Esophagus squamous epithelium (tissue), 5 donors: ENCODE measurements at regions of chr17 and their contacts with region 1.

Region 1: DNA sequence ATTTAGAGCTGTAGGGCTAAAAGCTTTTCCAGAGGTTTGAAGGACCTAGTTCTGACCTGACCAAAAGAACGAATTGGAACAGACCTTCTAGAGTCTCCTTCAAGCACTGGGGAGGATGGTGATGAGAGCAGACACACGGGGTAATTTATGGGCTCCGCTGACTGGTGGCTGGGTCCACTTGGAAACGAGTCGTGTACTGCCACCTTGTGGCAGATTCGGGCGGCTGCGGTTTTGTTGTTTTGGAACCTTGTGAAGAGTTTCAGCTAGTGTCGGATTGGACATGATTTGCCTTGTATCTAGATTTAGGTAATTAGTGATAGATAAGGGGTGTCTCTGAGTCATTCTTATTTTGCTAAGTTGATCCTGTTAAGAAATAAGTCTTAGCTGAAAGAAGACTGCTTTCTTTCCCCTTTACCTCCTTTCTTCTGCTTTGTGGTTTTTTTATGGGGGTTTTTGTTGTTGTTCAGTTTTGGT is 98.9 kb downstream of the AATF start:
- DNase-seq: no peak
- H3K4me3 ChIP-seq: no peak overlapping the region
- H3K27ac ChIP-seq: no peak overlapping the region
- H3K4me1 ChIP-seq: peaks cover 0 to 5% (median 0%) of the 10 kb centered on the region in 3 donors
- H3K27me3 ChIP-seq: no peaks in the 10 kb centered on the region
- CTCF ChIP-seq: peak; percentile 76 to 89 (median 86)
- POLR2A ChIP-seq: no peak

Region 2: DNA sequence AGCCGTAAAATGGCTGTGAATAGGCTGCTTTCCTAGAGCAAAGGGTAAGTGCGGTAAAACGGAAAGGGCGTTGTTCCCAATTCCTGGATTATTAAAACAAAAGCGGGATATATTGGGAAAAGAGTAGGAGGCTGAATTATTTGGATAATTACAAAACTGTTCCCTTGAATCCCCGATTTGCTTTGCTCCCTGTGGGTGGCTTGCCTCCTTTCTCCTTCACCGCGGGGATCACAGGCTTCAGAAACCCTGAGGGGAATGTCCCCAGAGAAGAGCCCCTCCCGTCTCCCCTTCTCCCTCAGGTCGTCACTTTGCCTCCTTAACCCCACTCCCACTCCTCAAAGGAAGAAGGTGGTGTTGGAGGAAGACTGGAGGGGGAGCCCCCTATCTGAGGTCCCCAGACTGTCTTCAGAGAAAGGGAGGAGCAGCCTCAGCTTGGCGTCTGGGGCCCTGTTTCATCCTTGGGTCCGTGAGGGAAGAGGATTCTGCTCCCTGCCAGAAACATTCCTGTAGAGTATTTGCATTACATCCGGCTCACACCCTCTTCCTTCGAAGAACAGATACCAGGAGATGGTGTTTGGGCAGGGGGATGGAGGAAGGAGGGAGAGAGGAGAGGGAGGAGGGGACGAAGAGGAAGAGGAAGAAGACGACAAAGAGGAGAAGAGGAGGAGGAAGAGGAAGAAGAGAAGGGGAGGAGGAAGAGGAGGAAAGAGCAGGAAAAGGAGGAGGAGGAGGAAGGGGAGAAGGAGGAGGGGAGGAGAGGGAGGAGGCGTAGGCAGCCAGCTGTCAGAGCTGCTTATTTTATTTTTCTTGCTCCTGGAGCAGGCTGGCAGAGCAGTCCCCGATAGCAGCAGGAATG is 414.5 kb before region 1 on chr17:
- intact Hi-C with region 1: loop called (anchors 5 kb)
- DNase-seq: no peak
- H3K4me3 ChIP-seq: no peak overlapping the region
- H3K27ac ChIP-seq: no peak overlapping the region
- H3K4me1 ChIP-seq: peaks cover 0 to 7% (median 3%) of the 10 kb centered on the region in 3 donors
- H3K27me3 ChIP-seq: peaks cover 0 to 94% (median 0%) of the 10 kb centered on the region in 4 donors
- CTCF ChIP-seq: no peak
- POLR2A ChIP-seq: no peak

Region 3: GRCh38 chr17:37576281-37576680 is 528.6 kb after region 1 on chr17:
- intact Hi-C with region 1: no loop called
- DNase-seq: no peak
- H3K4me3 ChIP-seq: no peak overlapping the region
- H3K27ac ChIP-seq: no peak overlapping the region
- H3K4me1 ChIP-seq: no peaks in the 10 kb centered on the region
- H3K27me3 ChIP-seq: no peaks in the 10 kb centered on the region
- CTCF ChIP-seq: no peak
- POLR2A ChIP-seq: no peak